ENCODE measurements at regions of chr1 and their contacts with region 1.

Region 1: DNA sequence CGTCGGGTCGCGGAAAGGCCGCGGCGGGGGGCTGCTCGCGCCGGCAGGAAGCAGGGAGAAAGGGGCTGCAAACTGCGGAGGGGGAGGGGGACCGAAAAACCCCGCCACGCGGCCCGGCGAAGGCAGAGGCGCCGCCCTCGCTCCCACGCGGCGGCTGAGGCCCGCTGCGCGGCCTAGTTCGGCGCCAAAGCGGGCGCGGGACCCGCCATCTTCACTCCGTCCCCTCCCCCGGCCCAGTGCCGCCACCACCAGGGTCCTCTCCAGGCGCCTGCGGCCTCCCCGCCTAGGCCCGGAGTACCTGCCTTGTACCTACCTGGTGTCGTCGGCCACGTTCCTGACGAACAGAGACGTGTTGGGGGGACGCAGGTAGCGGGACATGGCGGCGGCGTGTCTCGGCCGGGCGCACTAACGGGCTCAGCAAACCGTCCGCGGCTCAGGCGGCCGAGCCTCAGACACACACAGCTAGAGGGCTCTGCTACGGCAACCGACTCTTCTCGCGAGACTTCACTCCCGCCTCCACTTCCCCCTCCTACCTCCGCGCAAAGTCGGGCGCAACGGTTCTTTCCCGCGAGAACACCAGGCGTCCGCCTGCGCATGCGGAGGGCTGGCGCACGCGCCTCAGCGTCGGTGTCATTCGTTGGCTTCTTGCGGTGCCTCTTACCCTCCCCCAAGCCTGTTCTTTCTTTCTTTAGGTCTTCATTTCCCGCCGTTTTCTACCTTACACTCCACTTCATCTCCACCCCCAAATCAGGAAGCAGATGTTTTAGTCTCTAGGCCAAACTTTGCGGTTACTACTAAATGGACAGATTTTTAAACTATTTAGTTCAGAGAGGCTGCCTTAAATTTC is at the start of gene SRSF10:
- DNase-seq: peak; percentile 95 to 98 (median 98)
- H3K4me3 ChIP-seq: peak within 1 kb of the TSS; percentile 66 to 98 (median 92)
- H3K27ac ChIP-seq: peak within 1 kb of the TSS; percentile 61 to 99 (median 95)
- H3K27me3 ChIP-seq: no peaks in the 10 kb centered on the region
- CTCF ChIP-seq: peak in 55 of 56 donors; percentile 40 to 88 (median 75)
- total RNA-seq, gene SRSF10: 59.4 to 96.0 (median 77.6) TPM

Region 2: GRCh38 chr1:23777979-23778814 is 201.9 kb before region 1 on chr1 and contains the start of gene PITHD1:
- intact Hi-C with region 1: no loop called
- DNase-seq: peak; percentile 55 to 85 (median 74)
- H3K4me3 ChIP-seq: peak within 1 kb of the TSS; percentile 53 to 100 (median 96)
- H3K27ac ChIP-seq: peak within 1 kb of the TSS in 58 of 59 donors; percentile 17 to 94 (median 85)
- H3K27me3 ChIP-seq: no peaks in the 10 kb centered on the region
- CTCF ChIP-seq: peak in 25 of 56 donors; percentile 3 to 59 (median 19)
- total RNA-seq, gene PITHD1: 72.3 to 213 (median 157) TPM

Region 3: GRCh38 chr1:23800400-23801337 is 179.4 kb before region 1 on chr1 and contains the start of gene GALE:
- intact Hi-C with region 1: loop called in 1 of 2 experiments (anchors 10 kb)
- DNase-seq: peak; percentile 95 to 97 (median 96)
- H3K4me3 ChIP-seq: peak within 1 kb of the TSS; percentile 64 to 99 (median 91)
- H3K27ac ChIP-seq: peak within 1 kb of the TSS; percentile 70 to 99 (median 96)
- H3K27me3 ChIP-seq: no peaks in the 10 kb centered on the region
- CTCF ChIP-seq: peak in 25 of 56 donors; percentile 7 to 63 (median 27)
- total RNA-seq, gene GALE: 13.2 to 40.0 (median 24.0) TPM

Region 4: GRCh38 chr1:23959461-23960290 is 20.4 kb before region 1 on chr1 and contains the start of gene PNRC2:
- intact Hi-C with region 1: loop called (anchors 1 kb)
- DNase-seq: peak; percentile 95 to 99 (median 98)
- H3K4me3 ChIP-seq: peak within 1 kb of the TSS; percentile 52 to 98 (median 84)
- H3K27ac ChIP-seq: peak within 1 kb of the TSS; percentile 87 to 100 (median 99)
- H3K27me3 ChIP-seq: no peaks in the 10 kb centered on the region
- CTCF ChIP-seq: peak in 28 of 56 donors; percentile 4 to 39 (median 20)
- total RNA-seq, gene PNRC2: 40.7 to 123 (median 66.8) TPM